Activated CD4-positive, alpha-beta memory T cell treated with anti-CD3 and anti-CD28 coated beads for 36 hours (primary cell): ENCODE measurements at regions of chr5 and their contacts with region 1.

Region 1: DNA sequence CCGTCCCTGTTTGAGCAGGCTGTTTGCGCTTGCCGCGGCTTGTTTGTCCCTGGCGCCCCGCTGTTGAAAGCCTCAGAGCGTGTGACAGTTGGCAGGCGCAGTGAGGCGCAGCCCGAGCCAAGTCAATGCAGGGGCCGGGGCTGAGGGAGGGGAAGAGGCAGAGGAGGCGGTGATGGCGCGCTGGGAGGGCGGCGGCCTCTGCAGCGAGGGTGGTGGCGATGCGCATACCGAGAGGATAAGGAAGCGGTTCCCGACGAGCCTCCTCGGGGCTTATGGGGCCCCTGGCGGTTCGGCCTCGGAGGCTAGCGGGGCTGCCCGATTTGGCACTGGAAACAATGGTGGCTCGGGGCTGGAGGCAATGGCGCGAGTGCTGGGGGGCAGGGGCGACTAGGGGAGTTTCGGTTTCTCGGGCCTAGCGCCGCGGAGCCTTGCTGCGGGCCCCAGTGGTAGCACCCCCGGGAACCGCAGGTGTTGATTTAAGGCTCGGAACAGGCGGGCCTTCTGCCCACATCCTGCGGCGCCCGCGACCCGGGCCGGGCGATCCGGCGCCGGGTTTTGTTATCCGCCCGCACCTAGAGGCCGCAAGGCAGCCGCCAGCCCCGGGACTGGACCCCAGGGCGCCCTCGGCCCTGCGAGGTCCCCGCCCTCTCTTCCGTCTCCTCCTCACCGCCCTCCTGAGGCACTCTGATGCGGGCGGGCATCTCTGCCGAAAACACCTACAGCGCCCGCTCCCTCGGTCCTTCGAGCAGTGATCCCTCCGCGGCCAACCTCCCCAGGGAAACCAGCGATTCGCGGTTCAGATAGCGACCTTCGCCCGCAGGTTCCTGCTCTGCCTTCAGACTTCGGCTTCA is 947 bp upstream of the LNPEP start:
- DNase-seq: peak; percentile 96
- H3K4me3 Mint-ChIP-seq: peak overlapping the region; percentile 90
- H3K27ac Mint-ChIP-seq: peak overlapping the region; percentile 98
- H3K4me1 Mint-ChIP-seq: peaks cover 58% of the 10 kb centered on the region
- H3K27me3 Mint-ChIP-seq: no peaks in the 10 kb centered on the region

Region 2: GRCh38 chr5:96752341-96753016 is 182.5 kb before region 1 on chr5:
- CTCF ChIA-PET with region 1: no interaction called
- POLR2A ChIA-PET with region 1: no interaction called
- intact Hi-C with region 1: loop called (anchors 5 kb)
- DNase-seq: no peak
- H3K4me3 Mint-ChIP-seq: no peak overlapping the region
- H3K27ac Mint-ChIP-seq: no peak overlapping the region
- H3K4me1 Mint-ChIP-seq: peaks cover 15% of the 10 kb centered on the region
- H3K27me3 Mint-ChIP-seq: no peaks in the 10 kb centered on the region

Region 3: GRCh38 chr5:96823900-96824351 is 111.0 kb before region 1 on chr5:
- CTCF ChIA-PET with region 1: no interaction called
- POLR2A ChIA-PET with region 1: no interaction called
- intact Hi-C with region 1: no loop called
- DNase-seq: peak; percentile 46
- H3K4me3 Mint-ChIP-seq: no peak overlapping the region
- H3K27ac Mint-ChIP-seq: no peak overlapping the region
- H3K4me1 Mint-ChIP-seq: peaks cover 46% of the 10 kb centered on the region
- H3K27me3 Mint-ChIP-seq: no peaks in the 10 kb centered on the region

Region 4: DNA sequence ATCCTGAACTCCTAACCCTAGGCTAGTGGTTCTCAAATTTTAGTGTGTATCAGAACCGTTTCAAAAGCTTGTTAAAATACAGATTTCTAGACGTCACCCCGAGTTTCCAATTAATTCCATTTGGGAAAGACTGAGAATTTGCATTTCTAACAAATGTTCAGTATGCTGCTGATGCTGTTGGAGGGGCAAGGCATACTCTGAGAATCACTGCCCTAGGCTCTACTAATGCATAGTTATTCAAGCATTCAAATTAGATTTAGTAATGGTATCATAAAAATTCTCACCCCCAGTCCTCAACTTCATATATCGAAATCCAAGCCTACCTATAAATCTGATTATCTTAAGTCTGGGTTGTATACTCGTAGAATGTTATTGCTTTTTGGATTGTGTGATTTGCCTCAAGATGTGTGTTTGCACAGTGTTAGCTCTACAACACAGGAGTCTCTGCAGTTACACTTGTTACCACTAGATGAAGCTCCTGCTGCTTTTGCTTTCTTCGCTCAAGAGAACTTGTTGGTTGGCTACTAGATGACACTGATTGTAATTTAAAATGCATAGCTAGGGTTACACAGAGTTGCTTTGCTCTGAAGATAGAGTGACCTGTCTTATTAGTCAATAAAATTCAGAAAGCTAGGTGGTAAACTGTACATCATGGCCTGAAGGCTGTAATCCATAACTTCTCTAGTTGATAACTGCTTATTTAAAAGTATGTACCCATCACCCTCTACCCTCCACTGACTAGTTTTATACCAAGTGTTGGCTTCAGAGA is 66.1 kb before region 1 on chr5:
- CTCF ChIA-PET with region 1: interaction called, 10 read pairs
- POLR2A ChIA-PET with region 1: interaction called, 8 read pairs
- intact Hi-C with region 1: loop called (anchors 1 kb)
- DNase-seq: no peak
- H3K4me3 Mint-ChIP-seq: no peak overlapping the region
- H3K27ac Mint-ChIP-seq: no peak overlapping the region
- H3K4me1 Mint-ChIP-seq: peaks cover 50% of the 10 kb centered on the region
- H3K27me3 Mint-ChIP-seq: no peaks in the 10 kb centered on the region

Region 5: DNA sequence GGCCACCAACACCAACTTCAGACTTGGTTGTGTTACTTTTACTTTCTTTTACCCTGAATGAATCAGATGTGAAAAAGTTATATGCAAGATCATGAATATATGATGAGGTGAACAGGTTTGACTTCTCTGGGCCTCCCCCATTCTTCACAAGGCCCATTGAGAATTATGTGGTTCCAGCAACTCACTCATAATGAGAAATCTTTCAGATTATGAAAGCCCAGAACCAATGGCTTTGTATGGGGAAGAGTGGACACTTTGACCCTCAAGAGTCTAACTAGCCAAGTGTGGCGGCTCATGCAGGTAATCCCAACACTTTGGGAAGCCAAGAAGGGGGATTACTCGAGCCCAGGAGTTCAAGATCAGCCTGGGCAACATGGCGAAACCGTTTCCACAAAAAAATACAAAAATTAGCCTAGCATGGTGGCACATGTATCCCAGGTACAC is 15.2 kb before region 1 on chr5:
- CTCF ChIA-PET with region 1: no interaction called
- POLR2A ChIA-PET with region 1: interaction called, 4 read pairs
- intact Hi-C with region 1: loop called (anchors 1 kb)
- DNase-seq: peak; percentile 33
- H3K4me3 Mint-ChIP-seq: no peak overlapping the region
- H3K27ac Mint-ChIP-seq: no peak overlapping the region
- H3K4me1 Mint-ChIP-seq: peaks cover 36% of the 10 kb centered on the region
- H3K27me3 Mint-ChIP-seq: no peaks in the 10 kb centered on the region

Region 6: DNA sequence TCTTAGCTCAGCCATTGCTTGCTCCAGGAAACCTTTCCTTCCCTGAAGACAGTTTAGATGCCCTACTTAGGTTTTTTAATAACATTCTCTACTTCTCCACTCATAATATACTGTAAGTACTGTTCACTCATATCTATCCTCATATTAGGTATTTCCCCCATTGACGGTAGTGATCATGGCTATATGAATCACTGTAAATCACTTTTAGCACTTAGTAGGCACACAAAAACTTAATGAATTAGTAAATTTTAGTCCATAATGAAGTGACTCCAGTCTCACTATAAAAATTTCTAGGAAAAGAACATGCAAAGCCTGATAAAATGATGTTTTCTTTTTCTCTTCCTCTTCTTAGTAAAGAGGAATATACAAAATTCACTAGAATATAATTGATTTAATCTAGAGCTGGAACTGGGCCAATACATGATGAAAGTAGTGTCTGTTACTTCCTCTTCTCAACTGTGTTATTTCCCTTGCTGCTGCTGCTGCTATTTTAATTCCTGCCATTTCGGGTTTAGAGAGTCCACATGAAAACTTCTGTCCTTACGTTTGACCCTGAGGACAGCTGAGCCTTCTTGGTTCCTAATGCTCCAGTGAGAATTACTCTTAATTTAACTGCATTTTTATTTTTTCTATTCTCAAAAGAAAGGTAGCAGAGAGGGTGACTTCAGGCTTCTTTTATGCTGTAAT is 74.4 kb after region 1 on chr5:
- CTCF ChIA-PET with region 1: no interaction called
- POLR2A ChIA-PET with region 1: no interaction called
- intact Hi-C with region 1: loop called (anchors 2 kb)
- DNase-seq: no peak
- H3K4me3 Mint-ChIP-seq: no peak overlapping the region
- H3K27ac Mint-ChIP-seq: peak overlapping the region; percentile 47
- H3K4me1 Mint-ChIP-seq: peaks cover 19% of the 10 kb centered on the region
- H3K27me3 Mint-ChIP-seq: no peaks in the 10 kb centered on the region

Region 7: GRCh38 chr5:98928873-98929696 is 1994.2 kb after region 1 on chr5 and contains the start of gene CHD1:
- CTCF ChIA-PET with region 1: no interaction called
- POLR2A ChIA-PET with region 1: no interaction called
- intact Hi-C with region 1: loop called (anchors 1 kb)
- DNase-seq: peak; percentile 97
- H3K4me3 Mint-ChIP-seq: peak within 1 kb of the TSS; percentile 99
- H3K27ac Mint-ChIP-seq: peak within 1 kb of the TSS; percentile 100
- H3K4me1 Mint-ChIP-seq: peaks cover 55% of the 10 kb centered on the region
- H3K27me3 Mint-ChIP-seq: no peaks in the 10 kb centered on the region
- total RNA-seq, gene CHD1: 50.1 to 53.4 TPM